Activated CD4-positive, alpha-beta memory T cell treated with anti-CD3 and anti-CD28 coated beads for 36 hours (primary cell): ENCODE measurements at regions of chr15 and their contacts with region 1.

Region 1: GRCh38 chr15:51162865-51163762 is 68.4 kb upstream of the TNFAIP8L3 start:
- DNase-seq: peak; percentile 70
- H3K4me3 Mint-ChIP-seq: no peak overlapping the region
- H3K27ac Mint-ChIP-seq: no peak overlapping the region
- H3K4me1 Mint-ChIP-seq: no peaks in the 10 kb centered on the region
- H3K27me3 Mint-ChIP-seq: peaks cover 9% of the 10 kb centered on the region

Region 2: DNA sequence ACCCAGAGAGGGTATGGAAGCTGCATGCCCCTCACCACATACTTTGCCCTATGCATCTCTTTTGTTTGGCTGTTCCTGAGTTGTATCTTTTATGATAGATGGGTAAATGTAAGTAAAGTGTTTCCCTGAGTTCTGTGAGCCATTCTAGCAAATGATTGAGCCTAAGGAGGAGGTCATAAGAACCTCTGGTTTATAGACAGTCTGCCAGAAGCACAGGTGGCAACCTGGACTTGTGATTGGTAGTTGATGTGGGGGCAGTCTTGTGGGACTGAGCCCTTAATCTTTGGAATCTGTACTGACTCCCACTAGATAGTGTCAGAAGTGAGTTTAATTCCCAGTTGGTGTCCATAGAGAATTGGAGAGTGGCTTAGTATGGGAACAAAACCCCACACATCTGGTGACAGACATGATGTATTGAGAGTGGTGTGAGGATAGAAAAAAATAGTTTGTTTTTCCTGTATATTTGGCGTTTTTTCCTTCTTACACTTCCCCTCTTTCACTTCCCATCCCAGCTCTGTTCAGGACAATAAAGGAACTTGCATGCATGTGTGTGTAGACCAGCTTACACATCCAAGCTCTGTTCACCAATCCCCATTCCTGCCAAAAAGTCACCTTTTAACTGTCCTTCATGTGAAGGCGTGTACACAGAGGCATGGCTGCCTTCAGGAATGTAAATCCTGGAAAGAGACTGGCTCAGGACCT is 359.5 kb before region 1 on chr15:
- CTCF ChIA-PET with region 1: no interaction called
- POLR2A ChIA-PET with region 1: no interaction called
- intact Hi-C with region 1: no loop called
- DNase-seq: no peak
- H3K4me3 Mint-ChIP-seq: no peak overlapping the region
- H3K27ac Mint-ChIP-seq: no peak overlapping the region
- H3K4me1 Mint-ChIP-seq: no peaks in the 10 kb centered on the region
- H3K27me3 Mint-ChIP-seq: no peaks in the 10 kb centered on the region

Region 3: GRCh38 chr15:51185213-51186159 is 22.4 kb after region 1 on chr15:
- CTCF ChIA-PET with region 1: interaction called, 89 read pairs
- POLR2A ChIA-PET with region 1: no interaction called
- intact Hi-C with region 1: no loop called
- DNase-seq: no peak
- H3K4me3 Mint-ChIP-seq: no peak overlapping the region
- H3K27ac Mint-ChIP-seq: no peak overlapping the region
- H3K4me1 Mint-ChIP-seq: no peaks in the 10 kb centered on the region
- H3K27me3 Mint-ChIP-seq: peaks cover 4% of the 10 kb centered on the region

Region 4: DNA sequence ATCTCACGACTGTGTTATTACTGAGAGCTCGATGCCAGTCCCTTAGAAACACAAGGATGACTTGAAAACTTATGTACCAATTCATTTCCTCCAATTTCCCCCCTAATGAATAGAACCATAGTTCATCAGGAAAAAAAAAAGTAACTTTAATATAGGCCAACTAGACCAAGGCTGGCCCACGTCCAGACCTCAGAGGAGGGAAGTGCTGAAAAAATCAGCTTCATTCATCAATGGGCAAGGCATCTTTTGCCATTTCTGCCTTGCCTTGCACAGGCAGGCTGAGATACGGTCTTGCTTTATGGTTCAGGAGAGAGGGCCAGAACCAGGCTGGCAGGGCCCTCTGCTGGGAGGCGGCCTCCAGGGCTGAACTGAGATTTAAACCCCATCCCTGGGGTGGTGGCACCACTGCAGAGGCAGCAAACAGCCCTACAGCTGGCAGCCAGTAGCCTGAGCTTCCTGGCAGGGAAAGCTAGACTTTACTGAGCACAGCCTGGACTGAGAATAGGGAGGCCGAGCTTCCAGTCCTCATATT is 35.7 kb after region 1 on chr15:
- CTCF ChIA-PET with region 1: interaction called, 89 read pairs
- POLR2A ChIA-PET with region 1: interaction called, 4 read pairs
- intact Hi-C with region 1: loop called (anchors 1 kb)
- DNase-seq: no peak
- H3K4me3 Mint-ChIP-seq: no peak overlapping the region
- H3K27ac Mint-ChIP-seq: no peak overlapping the region
- H3K4me1 Mint-ChIP-seq: no peaks in the 10 kb centered on the region
- H3K27me3 Mint-ChIP-seq: peaks cover 23% of the 10 kb centered on the region

Region 5: DNA sequence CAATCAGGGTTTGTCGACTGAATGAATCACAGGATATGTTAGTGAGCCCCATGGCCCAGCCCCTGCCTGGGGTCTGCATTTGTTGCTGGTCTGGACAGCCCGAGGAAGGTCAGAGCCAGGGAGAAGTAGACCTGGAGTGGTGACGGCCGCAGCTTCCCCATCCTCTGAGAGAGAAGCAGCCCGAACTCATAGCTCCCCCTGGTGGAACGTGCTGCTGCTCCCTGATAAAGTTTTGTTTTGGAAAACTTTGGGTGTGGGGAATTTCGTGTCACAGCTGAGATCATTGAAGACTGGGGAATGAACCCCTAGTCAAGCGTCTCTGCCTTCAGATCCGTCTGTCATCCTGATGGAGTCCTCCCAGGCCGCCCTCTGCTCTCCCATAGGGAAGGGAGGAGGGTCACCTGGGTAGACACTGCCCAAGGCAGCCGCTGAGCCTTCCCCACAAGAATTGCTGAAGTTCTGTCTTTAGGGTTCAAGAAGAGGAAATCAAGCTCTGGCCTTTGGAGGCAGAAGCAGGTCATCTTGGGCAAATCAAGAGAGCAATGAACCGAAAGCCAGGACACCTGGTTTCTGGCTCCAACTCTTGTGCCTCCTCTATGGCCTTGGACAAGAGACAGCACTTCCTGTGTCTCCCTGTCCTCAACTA is 238.9 kb after region 1 on chr15:
- CTCF ChIA-PET with region 1: interaction called, 13 read pairs
- POLR2A ChIA-PET with region 1: no interaction called
- intact Hi-C with region 1: loop called (anchors 1 kb)
- DNase-seq: peak; percentile 12
- H3K4me3 Mint-ChIP-seq: no peak overlapping the region
- H3K27ac Mint-ChIP-seq: no peak overlapping the region
- H3K4me1 Mint-ChIP-seq: no peaks in the 10 kb centered on the region
- H3K27me3 Mint-ChIP-seq: peaks cover 11% of the 10 kb centered on the region